Esophagus muscularis mucosa (tissue), 4 donors: ENCODE measurements at regions of chr7 and their contacts with region 1.

Region 1: DNA sequence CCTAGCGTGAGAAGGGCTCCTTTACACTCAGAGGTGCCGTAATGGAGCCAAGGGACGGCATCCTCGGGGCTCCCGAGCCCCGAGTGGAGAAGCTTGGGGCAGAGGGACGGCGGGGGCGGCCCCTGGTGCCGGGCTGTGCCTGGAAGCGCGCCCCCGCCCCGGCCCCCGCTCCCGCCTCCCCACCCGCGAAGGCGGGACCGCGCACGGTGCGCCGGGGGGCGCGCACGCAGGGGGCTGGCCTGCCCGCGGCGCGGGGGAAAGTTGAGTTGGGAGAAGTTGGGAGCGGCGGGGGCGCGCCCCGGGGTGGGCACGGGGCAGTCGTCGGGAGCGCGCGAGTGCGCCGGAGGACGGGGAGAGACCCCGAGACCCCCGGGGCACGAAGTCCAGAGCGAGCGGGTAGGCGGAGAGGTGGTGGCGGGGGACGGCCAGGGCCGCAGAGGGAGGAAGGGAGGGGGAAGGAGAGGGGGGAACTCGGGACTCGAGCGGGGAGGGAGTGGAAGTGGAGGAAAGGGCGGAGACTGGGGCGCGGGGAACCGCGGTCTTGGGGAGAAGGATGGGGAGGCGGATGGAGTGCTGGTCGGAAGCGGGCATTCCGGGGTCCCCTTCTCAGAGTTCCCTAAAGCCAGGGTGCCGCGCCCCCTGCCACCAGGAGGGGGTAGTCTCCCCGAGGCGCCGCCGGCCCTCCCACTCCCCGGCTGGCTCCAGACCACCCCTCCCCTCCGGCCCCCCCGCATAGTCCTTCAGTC is at the start of gene SLC4A2:
- DNase-seq: peak; percentile 96
- H3K4me3 ChIP-seq: peak within 1 kb of the TSS; percentile 72 to 94 (median 90)
- H3K27ac ChIP-seq: peak within 1 kb of the TSS; percentile 92 to 95 (median 93)
- H3K4me1 ChIP-seq: peaks cover 53 to 70% (median 68%) of the 10 kb centered on the region in 4 donors
- H3K27me3 ChIP-seq: no peaks in the 10 kb centered on the region
- CTCF ChIP-seq: peak; percentile 38 to 52 (median 42)
- EP300 ChIP-seq: no peak
- POLR2A ChIP-seq: no peak
- total RNA-seq, gene SLC4A2: 96.8 to 165 (median 122) TPM

Region 2: GRCh38 chr7:150974468-150975391 is 84.8 kb before region 1 on chr7:
- intact Hi-C with region 1: no loop called
- DNase-seq: no peak
- H3K4me3 ChIP-seq: peak overlapping the region; percentile 50 to 60 (median 56)
- H3K27ac ChIP-seq: peak overlapping the region; percentile 86 to 88 (median 88)
- H3K4me1 ChIP-seq: peaks cover 76 to 98% (median 96%) of the 10 kb centered on the region in 4 donors
- H3K27me3 ChIP-seq: peaks cover 0 to 48% (median 6%) of the 10 kb centered on the region in 4 donors
- CTCF ChIP-seq: peak in 2 of 3 experiments; percentile 43 to 45
- EP300 ChIP-seq: no peak
- POLR2A ChIP-seq: no peak

Region 3: GRCh38 chr7:151028131-151028947 is 31.2 kb before region 1 on chr7 and contains the start of gene ABCB8:
- intact Hi-C with region 1: loop called (anchors 5 kb)
- DNase-seq: peak; percentile 99
- H3K4me3 ChIP-seq: peak within 1 kb of the TSS; percentile 69 to 91 (median 74)
- H3K27ac ChIP-seq: peak within 1 kb of the TSS; percentile 80 to 88 (median 84)
- H3K4me1 ChIP-seq: peaks cover 7 to 27% (median 19%) of the 10 kb centered on the region in 4 donors
- H3K27me3 ChIP-seq: peaks cover 0 to 1% (median 0%) of the 10 kb centered on the region in 4 donors
- CTCF ChIP-seq: peak; percentile 42 to 54 (median 49)
- EP300 ChIP-seq: no peak
- POLR2A ChIP-seq: peak; percentile 48
- total RNA-seq, gene ABCB8: 13.1 to 25.3 (median 19.9) TPM

Region 4: DNA sequence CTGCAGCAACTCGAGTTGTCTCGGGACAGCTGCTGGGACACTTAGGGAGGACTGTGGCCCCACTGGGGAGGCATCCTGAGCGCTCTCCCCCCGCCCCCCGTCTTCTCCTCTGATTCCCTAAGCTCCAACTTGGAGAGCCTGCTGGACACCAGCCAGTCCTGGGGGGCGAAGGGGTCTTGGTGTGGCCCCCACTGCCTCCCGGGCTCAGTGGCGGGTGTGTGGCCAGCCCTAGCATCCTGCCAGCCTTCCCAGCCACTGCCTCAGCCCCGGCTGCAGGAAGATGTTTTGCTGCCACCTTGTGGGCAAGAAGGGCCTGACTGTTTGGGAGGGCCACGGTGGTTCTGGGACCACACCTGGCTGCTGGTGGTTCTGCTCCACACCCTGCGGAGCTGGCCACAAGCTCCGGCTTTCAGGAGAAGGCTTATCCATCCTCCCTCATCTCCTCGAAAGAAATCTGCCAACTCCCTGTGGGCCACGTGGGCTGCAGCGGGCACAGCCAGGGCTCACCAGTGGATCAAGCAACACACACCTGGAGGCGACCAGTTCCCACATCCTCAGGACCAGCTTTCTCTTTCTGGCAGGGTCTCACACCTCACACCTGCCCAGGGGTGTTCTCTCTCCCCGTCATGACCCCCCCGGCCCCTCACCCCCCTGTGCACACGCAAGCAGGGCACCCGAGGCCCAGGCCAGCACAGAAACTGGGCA is 51.6 kb after region 1 on chr7:
- intact Hi-C with region 1: loop called (anchors 5 kb)
- DNase-seq: peak; percentile 95
- H3K4me3 ChIP-seq: no peak overlapping the region
- H3K27ac ChIP-seq: peak overlapping the region in 2 of 4 donors; percentile 5 to 20
- H3K4me1 ChIP-seq: peaks cover 17 to 58% (median 46%) of the 10 kb centered on the region in 4 donors
- H3K27me3 ChIP-seq: no peaks in the 10 kb centered on the region
- CTCF ChIP-seq: peak; percentile 88 to 96 (median 88)
- EP300 ChIP-seq: no peak
- POLR2A ChIP-seq: no peak